Colonic mucosa (tissue), 4 donors: ENCODE measurements at regions of chr15 and their contacts with region 1.

Region 1: DNA sequence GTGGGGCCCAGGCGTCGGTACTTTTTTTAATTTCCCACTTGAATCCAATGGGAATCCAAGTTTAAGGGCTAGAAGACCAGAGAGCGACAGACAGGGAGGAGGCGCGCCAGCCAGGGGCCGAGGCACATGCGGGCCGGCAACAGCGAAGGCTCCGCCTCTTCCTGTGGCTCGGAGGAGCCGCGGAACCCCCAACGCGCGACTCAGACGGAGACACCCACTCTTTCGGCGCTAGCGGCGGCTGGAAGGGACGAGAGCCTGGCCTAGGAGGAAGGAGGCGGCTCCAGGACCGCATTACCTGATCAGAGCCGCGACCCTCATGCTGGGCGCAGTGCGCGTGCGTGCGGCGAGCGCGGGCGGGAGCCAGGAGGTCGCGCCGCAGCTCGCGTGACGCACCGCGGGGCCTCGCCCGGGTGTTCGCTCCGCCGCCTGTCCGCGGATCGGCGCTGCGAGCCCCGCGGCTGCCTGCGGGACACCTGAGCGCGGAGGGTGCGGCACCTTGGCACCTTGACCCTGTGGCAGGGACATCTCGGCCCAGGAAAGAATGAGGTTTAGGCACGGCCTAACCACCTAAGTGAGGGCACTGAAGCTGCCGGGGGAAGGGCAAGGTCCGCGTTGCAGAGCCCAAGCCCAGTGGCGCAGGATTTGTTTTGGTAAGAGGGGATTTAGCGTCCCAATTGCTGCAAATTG is at the start of gene DPH6:
- DNase-seq: peak; percentile 80
- H3K4me3 ChIP-seq: peak within 1 kb of the TSS; percentile 69
- H3K27ac ChIP-seq: peak within 1 kb of the TSS; percentile 97
- H3K4me1 ChIP-seq: no peaks in the 10 kb centered on the region
- H3K27me3 ChIP-seq: no peaks in the 10 kb centered on the region
- CTCF ChIP-seq: no peak
- total RNA-seq, gene DPH6: 14.8 to 15.3 TPM

Region 2: GRCh38 chr15:35665896-35666536 is 120.0 kb after region 1 on chr15:
- intact Hi-C with region 1: loop called (anchors 10 kb)
- DNase-seq: no peak
- H3K4me3 ChIP-seq: no peak overlapping the region
- H3K27ac ChIP-seq: no peak overlapping the region
- H3K4me1 ChIP-seq: no peaks in the 10 kb centered on the region
- H3K27me3 ChIP-seq: no peaks in the 10 kb centered on the region
- CTCF ChIP-seq: no peak

Region 3: DNA sequence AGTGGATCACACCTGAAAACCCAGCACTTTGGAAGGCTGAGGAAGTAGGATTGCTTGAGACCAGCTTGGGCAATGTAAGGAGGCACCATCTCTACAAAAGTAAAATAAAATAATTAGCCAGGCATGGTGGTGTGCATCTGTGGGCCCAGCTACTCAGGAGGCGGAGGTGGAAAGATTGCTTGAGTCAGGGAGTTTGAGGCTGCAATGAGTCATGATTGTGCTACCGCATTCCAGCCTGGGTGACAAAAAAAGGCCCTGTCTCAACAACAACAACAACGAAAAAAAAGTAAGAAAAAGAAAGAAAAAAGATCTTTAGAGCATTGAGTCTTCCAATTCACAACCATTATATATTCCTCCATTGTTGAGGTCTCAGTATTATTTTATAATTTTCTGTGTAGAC is 192.4 kb after region 1 on chr15:
- intact Hi-C with region 1: loop called (anchors 10 kb)
- DNase-seq: no peak
- H3K4me3 ChIP-seq: no peak overlapping the region
- H3K27ac ChIP-seq: no peak overlapping the region
- H3K4me1 ChIP-seq: no peaks in the 10 kb centered on the region
- H3K27me3 ChIP-seq: no peaks in the 10 kb centered on the region
- CTCF ChIP-seq: no peak

Region 4: DNA sequence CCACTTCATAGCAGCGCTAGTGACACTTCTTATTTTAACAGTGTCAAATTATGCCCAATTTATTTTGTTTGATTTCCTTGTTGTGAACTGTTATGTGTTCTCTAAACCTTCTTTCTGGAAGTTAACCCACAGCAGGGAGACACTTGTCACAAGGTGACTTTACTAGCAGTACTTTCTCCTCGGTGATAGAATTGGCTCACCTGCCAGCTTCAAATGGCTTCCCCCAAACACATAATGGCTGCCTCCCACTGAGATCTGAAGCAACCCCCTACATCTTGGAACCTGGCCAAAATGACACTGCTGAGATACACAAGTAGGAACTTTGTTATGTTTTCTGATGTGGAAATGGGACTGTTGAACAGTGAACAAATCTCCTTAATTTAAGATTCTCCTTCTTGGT is 238.8 kb after region 1 on chr15:
- intact Hi-C with region 1: no loop called
- DNase-seq: no peak
- H3K4me3 ChIP-seq: no peak overlapping the region
- H3K27ac ChIP-seq: no peak overlapping the region
- H3K4me1 ChIP-seq: no peaks in the 10 kb centered on the region
- H3K27me3 ChIP-seq: no peaks in the 10 kb centered on the region
- CTCF ChIP-seq: no peak